CD4-positive, alpha-beta T cell (primary cell): ENCODE measurements at regions of chr14 and their contacts with region 1.

Region 1: DNA sequence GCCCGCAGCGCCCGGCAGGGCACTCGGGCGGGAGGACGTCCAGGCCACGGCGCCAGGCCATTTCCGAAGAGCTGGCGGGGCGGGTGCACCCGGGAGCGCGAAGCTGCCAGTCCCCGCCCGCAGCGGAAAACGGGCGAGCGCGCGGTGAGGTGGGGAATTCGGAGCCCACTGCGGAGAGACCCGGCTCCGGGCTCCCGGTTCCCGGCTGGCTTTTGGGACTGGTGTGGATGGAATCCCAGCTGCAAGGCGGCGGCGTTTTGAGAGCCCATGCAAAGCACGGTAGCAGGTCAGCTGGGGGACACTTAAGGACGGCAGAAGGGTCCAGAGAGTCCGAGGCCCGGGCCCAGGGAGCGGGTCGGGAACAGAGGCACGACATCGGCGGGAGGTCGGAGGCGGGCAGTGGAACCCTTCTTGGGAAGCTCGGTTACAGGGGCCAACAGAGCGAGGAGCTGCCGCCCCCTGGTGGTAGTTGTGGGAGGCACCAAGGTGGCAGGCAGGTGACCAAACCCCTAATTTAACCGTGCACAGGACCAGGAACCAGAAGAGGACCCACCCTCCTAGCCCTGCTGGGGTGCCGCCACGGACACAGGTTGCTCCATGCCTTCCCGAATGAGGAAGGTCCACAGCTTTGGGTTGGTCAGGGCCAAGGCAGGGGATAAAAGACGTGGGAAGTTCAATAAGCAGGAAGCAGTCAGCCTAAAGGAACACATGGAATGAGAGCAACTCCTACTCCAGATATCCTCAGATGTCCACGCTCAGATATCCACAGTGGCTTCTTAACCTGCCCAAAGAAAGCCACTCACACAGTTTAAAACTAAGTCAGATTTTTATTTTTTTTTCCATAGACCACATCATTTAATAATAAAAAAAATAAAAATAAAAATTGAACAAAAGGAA is 685 bp upstream of the CDH24 start:
- DNase-seq: peak; percentile 74 to 94 (median 86)
- ATAC-seq: peak; percentile 73
- H3K4me3 ChIP-seq: peak overlapping the region; percentile 75
- H3K4me3 Mint-ChIP-seq: peak overlapping the region; percentile 90
- H3K27ac ChIP-seq: no peak overlapping the region
- H3K27ac Mint-ChIP-seq: peak overlapping the region; percentile 63
- H3K4me1 ChIP-seq: peaks cover 24% of the 10 kb centered on the region
- H3K4me1 Mint-ChIP-seq: peaks cover 18% of the 10 kb centered on the region
- H3K27me3 ChIP-seq: no peaks in the 10 kb centered on the region
- H3K27me3 Mint-ChIP-seq: no peaks in the 10 kb centered on the region
- CTCF ChIP-seq: peak; percentile 91

Region 2: DNA sequence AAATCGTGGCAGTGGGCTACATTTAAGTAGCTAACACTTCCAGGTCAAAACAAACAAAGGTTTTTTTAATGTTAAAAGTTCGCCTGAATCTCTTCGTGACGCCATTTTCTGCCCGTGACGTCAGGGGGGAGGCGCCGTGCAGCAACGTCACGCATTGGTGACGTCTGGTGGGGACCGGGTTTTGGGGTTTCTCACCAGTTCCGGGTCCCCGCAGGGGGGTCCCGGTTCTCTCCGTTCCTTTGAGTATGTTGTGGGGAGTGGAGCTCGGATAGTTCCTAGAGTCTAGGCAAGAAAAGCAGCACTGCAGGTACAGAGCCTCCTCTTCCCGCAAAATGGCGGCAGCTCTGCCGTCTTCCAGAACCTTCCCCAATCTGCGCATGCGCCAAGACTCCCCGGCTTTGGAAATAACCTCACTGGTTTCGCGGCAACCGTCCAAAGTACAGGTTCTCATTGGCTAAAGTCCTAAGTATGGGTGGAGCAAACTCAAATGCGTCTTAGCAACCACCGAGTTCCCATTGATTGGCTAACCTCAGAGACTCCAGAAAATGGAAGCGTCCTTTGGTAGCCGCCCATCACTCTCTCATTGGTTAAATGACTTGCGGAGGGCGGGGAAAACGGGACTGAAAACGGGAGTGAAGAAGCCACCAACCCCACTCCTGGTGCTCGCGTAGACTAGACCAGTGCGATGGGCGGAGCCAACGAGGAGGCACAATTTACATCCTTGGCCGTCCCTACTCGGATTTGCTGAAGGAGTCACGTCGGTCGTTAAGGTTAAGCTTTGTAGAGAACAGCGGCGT is 139.0 kb before region 1 on chr14 and contains the start of gene RBM23:
- CTCF ChIA-PET with region 1: no interaction called
- POLR2A ChIA-PET with region 1: no interaction called
- intact Hi-C with region 1: no loop called
- DNase-seq: peak; percentile 99 to 100 (median 100)
- ATAC-seq: peak; percentile 84
- H3K4me3 ChIP-seq: peak within 1 kb of the TSS; percentile 74
- H3K4me3 Mint-ChIP-seq: peak within 1 kb of the TSS; percentile 88
- H3K27ac ChIP-seq: peak within 1 kb of the TSS; percentile 99 to 100
- H3K27ac Mint-ChIP-seq: peak within 1 kb of the TSS; percentile 100
- H3K4me1 ChIP-seq: peaks cover 38% of the 10 kb centered on the region
- H3K4me1 Mint-ChIP-seq: peaks cover 50% of the 10 kb centered on the region
- H3K27me3 ChIP-seq: no peaks in the 10 kb centered on the region
- H3K27me3 Mint-ChIP-seq: peaks cover 4% of the 10 kb centered on the region
- CTCF ChIP-seq: no peak
- total RNA-seq, gene RBM23: 87.9 to 111 TPM

Region 3: DNA sequence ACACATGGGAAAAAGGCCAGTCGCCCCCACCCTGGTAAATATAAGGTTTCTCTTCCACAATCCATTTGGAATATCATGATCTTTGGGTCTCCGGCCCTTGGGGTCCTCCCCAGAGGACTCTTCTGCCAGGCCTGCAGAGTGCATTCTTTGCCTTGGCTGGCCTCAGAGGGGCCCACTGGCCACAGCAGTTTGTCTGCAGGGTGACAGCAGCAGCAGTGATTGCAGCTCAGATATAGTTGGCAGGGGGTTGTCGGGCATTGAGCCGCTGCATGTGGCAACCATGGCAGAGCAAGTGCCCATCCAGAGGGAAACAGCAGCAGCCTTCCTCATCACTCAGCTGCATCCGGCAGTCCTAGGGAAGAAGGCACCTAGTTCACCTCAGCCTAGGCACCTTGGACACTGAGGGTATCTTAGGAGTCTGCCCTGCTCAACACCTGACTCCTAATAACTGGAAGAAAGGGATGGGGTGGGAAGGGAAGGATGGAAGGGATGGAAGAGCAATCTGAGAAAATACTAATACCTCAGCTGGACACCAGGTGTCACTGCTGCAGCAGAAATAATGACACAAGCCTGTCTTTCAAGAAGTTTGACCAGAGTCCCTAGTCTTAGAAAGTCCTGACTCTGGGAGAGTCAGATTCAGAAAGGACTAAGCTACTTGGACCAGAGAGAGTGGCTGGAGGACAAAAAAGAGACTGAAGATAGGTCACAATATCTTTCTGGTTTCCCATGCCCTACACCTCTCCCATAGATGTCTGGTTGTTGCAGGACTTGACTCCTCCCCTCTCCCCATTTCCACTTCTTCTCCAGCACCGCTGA is 84.6 kb before region 1 on chr14:
- CTCF ChIA-PET with region 1: interaction called, 23 read pairs
- POLR2A ChIA-PET with region 1: interaction called, 5 read pairs
- intact Hi-C with region 1: no loop called
- DNase-seq: peak in 9 of 14 experiments; percentile 14 to 73 (median 43)
- ATAC-seq: peak; percentile 69
- H3K4me3 ChIP-seq: no peak overlapping the region
- H3K4me3 Mint-ChIP-seq: no peak overlapping the region
- H3K27ac ChIP-seq: no peak overlapping the region
- H3K27ac Mint-ChIP-seq: no peak overlapping the region
- H3K4me1 ChIP-seq: no peaks in the 10 kb centered on the region
- H3K4me1 Mint-ChIP-seq: no peaks in the 10 kb centered on the region
- H3K27me3 ChIP-seq: no peaks in the 10 kb centered on the region
- H3K27me3 Mint-ChIP-seq: no peaks in the 10 kb centered on the region
- CTCF ChIP-seq: peak; percentile 75

Region 4: GRCh38 chr14:22994762-22995275 is 63.2 kb before region 1 on chr14:
- CTCF ChIA-PET with region 1: interaction called, 42 read pairs
- POLR2A ChIA-PET with region 1: interaction called, 29 read pairs
- intact Hi-C with region 1: loop called (anchors 2 kb)
- DNase-seq: peak in 8 of 14 experiments; percentile 11 to 66 (median 38)
- ATAC-seq: peak; percentile 80
- H3K4me3 ChIP-seq: no peak overlapping the region
- H3K4me3 Mint-ChIP-seq: no peak overlapping the region
- H3K27ac ChIP-seq: no peak overlapping the region
- H3K27ac Mint-ChIP-seq: no peak overlapping the region
- H3K4me1 ChIP-seq: no peaks in the 10 kb centered on the region
- H3K4me1 Mint-ChIP-seq: no peaks in the 10 kb centered on the region
- H3K27me3 ChIP-seq: no peaks in the 10 kb centered on the region
- H3K27me3 Mint-ChIP-seq: no peaks in the 10 kb centered on the region
- CTCF ChIP-seq: peak; percentile 59

Region 5: DNA sequence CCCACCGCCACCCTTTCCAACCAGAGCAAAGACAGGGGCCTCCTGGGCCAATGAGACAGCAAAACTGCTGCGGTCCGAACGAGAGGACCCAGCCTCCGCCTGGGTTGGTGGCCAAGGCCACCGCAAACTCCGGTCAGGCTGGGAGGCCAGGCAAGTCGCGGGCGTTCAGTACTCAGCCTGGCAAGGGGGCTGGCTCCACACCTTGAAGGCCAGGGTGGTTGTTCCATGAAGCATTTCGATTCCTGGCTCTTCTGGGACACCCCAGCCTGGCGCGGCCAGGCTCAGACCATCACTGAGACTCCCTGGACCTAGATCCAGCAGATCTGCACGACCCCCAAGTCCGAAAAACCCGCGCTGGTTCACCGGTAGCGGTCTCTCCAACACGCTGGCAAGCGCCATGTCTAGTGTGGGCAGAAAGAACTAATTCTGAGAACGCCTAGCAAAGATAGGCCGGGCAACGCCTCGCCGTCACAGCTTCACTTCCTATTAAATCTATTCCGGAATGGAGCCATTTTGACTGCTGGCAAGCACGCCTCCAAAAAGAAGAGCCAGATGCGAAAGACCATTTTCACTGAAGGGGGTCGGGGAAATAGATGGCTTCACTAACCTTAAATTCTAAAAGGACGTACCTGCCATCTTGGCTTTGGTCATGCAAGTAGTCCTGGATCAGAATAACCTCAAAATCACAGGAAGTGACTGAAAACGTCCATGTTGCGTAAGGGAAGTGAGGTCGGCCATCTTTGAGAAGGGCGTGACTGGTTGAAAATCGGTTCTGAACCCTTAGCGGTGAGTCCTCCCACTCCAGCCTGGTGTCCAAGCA is 23.3 kb before region 1 on chr14 and contains the start of gene PSMB5:
- CTCF ChIA-PET with region 1: interaction called, 8 read pairs
- POLR2A ChIA-PET with region 1: interaction called, 4 read pairs
- intact Hi-C with region 1: loop called in 1 of 2 experiments (anchors 2 kb)
- DNase-seq: peak; percentile 76 to 97 (median 80)
- ATAC-seq: peak; percentile 89
- H3K4me3 ChIP-seq: peak within 1 kb of the TSS; percentile 59
- H3K4me3 Mint-ChIP-seq: peak within 1 kb of the TSS; percentile 90
- H3K27ac ChIP-seq: peak within 1 kb of the TSS; percentile 75 to 94
- H3K27ac Mint-ChIP-seq: peak within 1 kb of the TSS; percentile 92
- H3K4me1 ChIP-seq: peaks cover 16% of the 10 kb centered on the region
- H3K4me1 Mint-ChIP-seq: peaks cover 36% of the 10 kb centered on the region
- H3K27me3 ChIP-seq: no peaks in the 10 kb centered on the region
- H3K27me3 Mint-ChIP-seq: no peaks in the 10 kb centered on the region
- CTCF ChIP-seq: no peak
- total RNA-seq, gene PSMB5: 20.1 to 24.5 TPM

Region 6: DNA sequence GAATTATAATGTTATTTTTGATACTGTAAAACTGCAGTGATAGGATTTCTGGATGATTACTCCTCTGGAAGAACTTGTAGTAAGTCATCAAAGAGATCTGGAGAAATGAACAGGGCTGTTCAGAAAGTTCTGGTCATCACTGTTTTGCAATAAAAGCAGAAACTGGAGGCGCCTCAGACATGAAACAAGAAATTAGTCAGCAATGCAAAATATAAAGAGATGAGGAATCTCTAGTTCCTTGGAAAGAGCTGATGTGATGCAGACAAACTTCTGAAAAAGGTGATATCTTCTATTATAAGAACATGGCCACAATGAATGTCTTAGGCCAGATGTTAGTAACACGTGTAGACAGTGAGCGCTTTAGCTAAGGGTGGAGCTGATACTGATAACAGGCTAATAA is 27.5 kb after region 1 on chr14:
- CTCF ChIA-PET with region 1: no interaction called
- POLR2A ChIA-PET with region 1: no interaction called
- intact Hi-C with region 1: no loop called
- DNase-seq: no peak
- ATAC-seq: no peak
- H3K4me3 ChIP-seq: no peak overlapping the region
- H3K4me3 Mint-ChIP-seq: no peak overlapping the region
- H3K27ac ChIP-seq: no peak overlapping the region
- H3K27ac Mint-ChIP-seq: no peak overlapping the region
- H3K4me1 ChIP-seq: no peaks in the 10 kb centered on the region
- H3K4me1 Mint-ChIP-seq: peaks cover 35% of the 10 kb centered on the region
- H3K27me3 ChIP-seq: no peaks in the 10 kb centered on the region
- H3K27me3 Mint-ChIP-seq: no peaks in the 10 kb centered on the region
- CTCF ChIP-seq: no peak

Region 7: GRCh38 chr14:23252420-23253333 is 194.7 kb after region 1 on chr14:
- CTCF ChIA-PET with region 1: no interaction called
- POLR2A ChIA-PET with region 1: no interaction called
- intact Hi-C with region 1: no loop called
- DNase-seq: no peak
- ATAC-seq: no peak
- H3K4me3 ChIP-seq: no peak overlapping the region
- H3K4me3 Mint-ChIP-seq: no peak overlapping the region
- H3K27ac ChIP-seq: no peak overlapping the region
- H3K27ac Mint-ChIP-seq: no peak overlapping the region
- H3K4me1 ChIP-seq: no peaks in the 10 kb centered on the region
- H3K4me1 Mint-ChIP-seq: no peaks in the 10 kb centered on the region
- H3K27me3 ChIP-seq: peaks cover 0 to 4% of the 10 kb centered on the region in 2 experiments
- H3K27me3 Mint-ChIP-seq: peaks cover 43% of the 10 kb centered on the region
- CTCF ChIP-seq: no peak